GM10248 (cell line): ENCODE measurements at regions of chr4 and their contacts with region 1.

Region 1: DNA sequence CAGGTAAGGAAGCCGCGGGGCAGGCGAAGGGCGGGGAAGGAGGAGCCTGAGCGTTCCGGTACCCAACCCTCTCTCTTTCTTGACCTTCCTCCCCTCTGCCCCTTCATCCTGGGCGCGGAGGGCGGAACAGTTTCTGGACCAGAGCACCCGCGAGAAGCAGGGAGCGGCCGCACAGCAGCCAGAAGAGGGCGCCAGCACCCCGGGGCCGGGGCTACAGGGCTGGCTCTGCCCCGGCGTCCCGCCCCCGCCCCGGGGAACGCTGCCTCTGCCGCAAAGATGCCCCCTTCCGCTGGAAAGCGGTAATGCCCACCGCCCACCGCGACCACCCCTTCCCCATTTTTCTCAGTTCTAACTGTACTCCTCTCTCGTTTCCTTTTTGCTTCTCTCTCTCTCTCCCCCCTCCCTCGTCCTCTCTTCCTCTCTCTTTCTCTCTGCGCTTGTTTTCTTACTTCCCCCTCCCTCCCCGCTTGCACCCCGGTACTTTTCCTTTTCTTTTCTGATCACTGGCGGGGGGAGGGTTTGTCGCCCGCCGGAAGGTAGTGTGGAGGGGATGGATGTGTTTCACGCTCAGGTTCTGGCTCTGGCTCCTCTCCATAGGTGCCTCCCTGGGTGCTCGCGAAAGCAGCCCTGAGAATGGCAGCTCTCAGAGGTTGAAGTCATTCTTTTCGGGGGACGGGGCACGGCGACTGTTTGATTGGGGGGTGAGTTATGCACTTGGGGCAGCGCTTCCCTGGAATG is 13.1 kb upstream of the PRDM8 start:
- DNase-seq: peak; percentile 91
- CTCF ChIP-seq: peak; percentile 92

Region 2: DNA sequence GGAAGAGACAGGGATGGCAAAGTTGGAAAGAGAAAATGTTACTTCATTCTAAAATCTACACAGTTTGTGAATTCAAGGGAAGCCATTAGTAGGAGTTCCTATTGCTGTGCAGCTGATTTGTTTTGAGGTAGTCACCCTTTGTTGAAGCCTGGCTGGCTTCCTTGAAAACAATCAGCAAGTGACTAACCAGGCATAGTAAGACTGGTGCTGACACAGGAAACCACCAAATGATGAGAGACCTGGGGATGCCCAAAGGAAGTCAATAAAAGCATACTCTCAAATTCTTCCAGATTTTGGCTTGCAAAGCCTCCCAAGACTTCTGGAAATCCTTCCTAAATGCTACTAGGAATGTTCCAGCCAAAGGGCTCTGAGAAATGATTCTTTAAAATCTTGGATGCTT is 10.8 kb before region 1 on chr4:
- CTCF ChIA-PET with region 1: interaction called, 25 read pairs
- POLR2A ChIA-PET with region 1: no interaction called
- DNase-seq: no peak
- CTCF ChIP-seq: no peak

Region 3: DNA sequence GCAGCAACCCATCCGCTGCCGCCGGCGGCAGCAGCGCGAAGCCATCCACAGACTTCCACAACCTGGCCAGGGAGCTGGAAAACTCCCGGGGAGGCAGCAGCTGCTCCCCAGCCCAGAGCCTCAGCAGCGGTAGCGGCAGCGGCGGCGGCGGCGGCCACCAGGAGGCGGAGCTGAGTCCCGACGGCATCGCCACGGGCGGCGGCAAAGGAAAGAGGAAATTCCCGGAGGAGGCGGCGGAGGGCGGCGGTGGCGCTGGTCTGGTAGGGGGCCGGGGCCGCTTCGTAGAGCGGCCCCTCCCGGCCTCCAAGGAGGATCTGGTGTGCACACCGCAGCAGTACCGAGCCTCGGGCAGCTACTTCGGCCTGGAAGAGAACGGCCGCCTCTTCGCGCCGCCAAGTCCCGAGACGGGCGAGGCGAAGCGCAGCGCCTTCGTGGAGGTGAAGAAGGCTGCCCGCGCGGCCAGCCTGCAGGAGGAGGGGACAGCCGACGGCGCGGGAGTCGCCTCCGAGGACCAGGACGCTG is 18.0 kb after region 1 on chr4:
- CTCF ChIA-PET with region 1: interaction called, 30 read pairs
- POLR2A ChIA-PET with region 1: no interaction called
- DNase-seq: peak; percentile 81
- CTCF ChIP-seq: peak; percentile 94

Region 4: DNA sequence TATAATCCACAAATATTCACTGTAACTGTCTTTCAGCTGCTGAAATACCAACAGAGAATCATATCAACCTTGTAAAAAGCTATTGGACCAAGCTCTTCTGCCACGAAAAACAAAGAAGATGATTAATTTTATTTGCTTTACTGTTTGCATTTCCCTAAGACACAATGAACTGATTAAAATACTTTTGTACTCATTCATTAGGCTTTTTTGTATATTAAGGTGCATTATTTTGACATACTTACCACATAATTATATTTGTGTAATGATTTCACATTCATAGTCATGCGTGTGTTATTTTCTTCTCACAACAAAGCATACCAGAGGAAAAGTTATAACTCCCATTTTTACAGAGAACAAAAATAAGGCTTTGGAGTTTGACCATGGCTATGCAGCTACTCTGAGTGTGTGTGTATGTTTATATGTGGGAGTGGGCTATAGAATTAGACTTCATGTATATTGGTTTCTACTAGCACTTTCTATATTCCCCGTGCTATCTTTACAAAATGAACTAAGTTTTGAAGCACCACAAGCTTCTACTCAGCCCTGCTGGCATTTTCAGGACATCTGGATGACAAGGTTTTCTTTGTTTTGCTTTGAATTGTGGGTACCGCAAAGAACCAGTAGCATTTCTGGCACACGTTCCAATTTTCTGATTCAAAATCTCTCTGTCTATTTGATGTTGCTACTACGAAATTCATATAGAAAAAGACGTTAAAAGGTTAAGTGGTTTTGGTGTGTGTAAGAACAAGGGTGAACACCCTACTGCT is 71.3 kb after region 1 on chr4:
- CTCF ChIA-PET with region 1: no interaction called
- POLR2A ChIA-PET with region 1: no interaction called
- DNase-seq: no peak
- CTCF ChIP-seq: no peak